ENCODE measurements at regions of chr10 and their contacts with region 1.

Region 1: GRCh38 chr10:97543025-97543575 is 29.5 kb upstream of the ANKRD2 start:
- DNase-seq: peak; percentile 85
- ATAC-seq: peak; percentile 94
- H3K4me3 Mint-ChIP-seq: no peak overlapping the region
- H3K27ac Mint-ChIP-seq: peak overlapping the region; percentile 75
- H3K4me1 Mint-ChIP-seq: peaks cover 22% of the 10 kb centered on the region
- H3K27me3 Mint-ChIP-seq: no peaks in the 10 kb centered on the region

Region 2: DNA sequence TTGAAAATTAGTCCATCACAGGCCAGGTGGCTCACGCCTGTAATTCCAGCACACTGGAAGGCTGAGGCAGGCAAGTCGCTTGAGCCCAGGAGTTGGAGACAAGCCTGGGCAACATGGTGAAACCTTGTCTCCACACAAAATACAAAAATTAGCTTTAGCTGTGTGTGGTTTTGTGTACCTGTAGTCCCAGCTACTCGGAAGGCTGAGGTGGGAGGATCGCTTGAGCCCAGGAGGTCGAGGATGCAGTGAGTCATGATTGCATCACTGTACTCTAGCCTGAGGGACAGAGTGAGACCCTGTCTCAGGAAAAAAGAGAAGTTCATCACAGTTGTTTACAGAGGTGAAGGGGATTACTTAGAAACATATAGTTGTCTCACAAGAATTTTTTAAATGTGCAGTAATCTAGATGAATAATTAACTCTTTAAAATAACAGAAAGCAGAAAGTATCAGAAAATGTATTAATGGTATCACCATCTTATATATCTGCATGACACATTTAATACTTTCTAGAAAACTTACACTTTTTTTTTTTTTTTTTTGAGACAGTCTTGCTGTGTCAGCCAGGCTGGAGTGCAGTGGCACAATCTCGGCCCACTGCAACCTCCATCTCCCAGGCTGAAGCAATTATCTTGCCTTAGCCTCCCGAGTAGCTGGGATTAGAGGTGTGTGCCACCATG is 702.1 kb before region 1 on chr10:
- CTCF ChIA-PET with region 1: no interaction called
- POLR2A ChIA-PET with region 1: no interaction called
- intact Hi-C with region 1: no loop called
- DNase-seq: peak; percentile 27
- ATAC-seq: peak; percentile 57
- H3K4me3 Mint-ChIP-seq: no peak overlapping the region
- H3K27ac Mint-ChIP-seq: peak overlapping the region; percentile 19
- H3K4me1 Mint-ChIP-seq: peaks cover 63% of the 10 kb centered on the region
- H3K27me3 Mint-ChIP-seq: no peaks in the 10 kb centered on the region

Region 3: DNA sequence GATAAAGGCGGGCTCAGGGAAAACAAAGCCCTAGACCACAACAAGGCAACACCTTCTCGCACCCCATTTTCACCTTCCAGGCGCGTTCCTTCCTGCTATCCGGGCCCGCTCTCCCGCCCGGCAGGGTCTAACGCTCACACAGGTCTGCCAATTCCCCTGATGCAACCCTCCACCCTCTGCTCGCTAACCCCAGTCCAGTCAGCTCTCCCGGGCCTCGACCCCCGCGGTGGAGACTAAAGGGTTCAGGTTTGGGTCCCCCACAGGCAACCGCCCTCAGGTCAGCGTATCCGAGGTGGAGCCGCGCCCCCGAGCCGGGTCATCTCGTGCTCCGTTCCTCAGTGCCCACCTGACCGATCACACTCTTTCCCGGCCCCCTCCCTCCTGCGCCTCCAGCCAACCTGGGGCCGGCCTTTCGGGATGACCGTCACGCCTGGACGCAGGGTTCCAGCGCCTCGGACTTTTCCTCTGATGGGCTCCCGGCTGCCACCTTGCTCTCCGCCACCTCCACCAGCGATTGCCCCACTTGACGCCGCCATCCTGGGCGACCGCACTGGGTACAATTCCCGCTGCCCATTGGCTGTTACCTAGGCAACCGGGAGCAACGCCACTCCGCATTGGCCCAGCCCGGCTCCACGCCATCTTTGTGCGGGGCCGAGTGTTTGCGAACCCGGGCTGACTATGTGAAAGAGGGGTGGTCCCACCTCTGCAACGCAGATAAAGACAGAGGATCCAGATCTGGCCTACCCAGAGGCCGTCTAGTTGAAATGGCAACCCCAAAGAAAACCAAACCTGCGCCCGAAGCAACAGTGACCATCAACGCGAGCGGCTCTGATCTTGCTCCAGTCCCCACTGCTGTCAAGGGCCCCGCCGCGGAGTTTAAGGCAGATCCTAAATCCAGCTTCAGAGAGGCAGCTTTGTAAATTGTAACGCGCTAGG is 90.1 kb after region 1 on chr10 and contains the start of gene MORN4:
- CTCF ChIA-PET with region 1: no interaction called
- POLR2A ChIA-PET with region 1: no interaction called
- intact Hi-C with region 1: loop called in 1 of 2 experiments (anchors 1 kb)
- DNase-seq: peak; percentile 94
- ATAC-seq: peak; percentile 99
- H3K4me3 Mint-ChIP-seq: peak within 1 kb of the TSS; percentile 85
- H3K27ac Mint-ChIP-seq: peak within 1 kb of the TSS; percentile 85
- H3K4me1 Mint-ChIP-seq: peaks cover 16% of the 10 kb centered on the region
- H3K27me3 Mint-ChIP-seq: no peaks in the 10 kb centered on the region
- total RNA-seq, gene MORN4: 3.9 to 5.3 TPM

Region 4: DNA sequence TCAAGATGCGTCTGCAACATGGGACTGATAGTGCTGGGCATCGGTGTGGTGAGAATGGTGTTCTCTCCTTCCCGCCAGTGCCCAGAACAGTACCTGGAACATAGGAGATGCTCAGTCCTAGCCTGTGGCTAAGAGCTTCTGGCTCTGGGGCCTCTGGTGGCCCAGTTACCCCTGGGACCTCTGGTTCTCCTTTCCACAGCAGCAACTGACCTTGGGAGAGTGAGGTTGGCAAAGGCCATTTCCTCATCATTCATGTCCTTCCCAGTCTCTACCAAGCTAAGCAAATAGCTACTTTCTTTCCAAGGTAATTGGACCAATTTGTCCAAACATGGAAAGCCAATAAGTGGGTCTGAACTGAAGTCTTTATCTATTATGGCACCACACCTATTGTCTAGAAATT is 295.0 kb after region 1 on chr10:
- CTCF ChIA-PET with region 1: no interaction called
- POLR2A ChIA-PET with region 1: no interaction called
- intact Hi-C with region 1: no loop called
- DNase-seq: no peak
- ATAC-seq: no peak
- H3K4me3 Mint-ChIP-seq: no peak overlapping the region
- H3K27ac Mint-ChIP-seq: no peak overlapping the region
- H3K4me1 Mint-ChIP-seq: peaks cover 16% of the 10 kb centered on the region
- H3K27me3 Mint-ChIP-seq: no peaks in the 10 kb centered on the region

Measured in activated CD4-positive, alpha-beta T cell treated with anti-CD3 and anti-CD28 coated beads for 36 hours (primary cell).